ENCODE measurements at regions of chr17 and their contacts with region 1.

Region 1: DNA sequence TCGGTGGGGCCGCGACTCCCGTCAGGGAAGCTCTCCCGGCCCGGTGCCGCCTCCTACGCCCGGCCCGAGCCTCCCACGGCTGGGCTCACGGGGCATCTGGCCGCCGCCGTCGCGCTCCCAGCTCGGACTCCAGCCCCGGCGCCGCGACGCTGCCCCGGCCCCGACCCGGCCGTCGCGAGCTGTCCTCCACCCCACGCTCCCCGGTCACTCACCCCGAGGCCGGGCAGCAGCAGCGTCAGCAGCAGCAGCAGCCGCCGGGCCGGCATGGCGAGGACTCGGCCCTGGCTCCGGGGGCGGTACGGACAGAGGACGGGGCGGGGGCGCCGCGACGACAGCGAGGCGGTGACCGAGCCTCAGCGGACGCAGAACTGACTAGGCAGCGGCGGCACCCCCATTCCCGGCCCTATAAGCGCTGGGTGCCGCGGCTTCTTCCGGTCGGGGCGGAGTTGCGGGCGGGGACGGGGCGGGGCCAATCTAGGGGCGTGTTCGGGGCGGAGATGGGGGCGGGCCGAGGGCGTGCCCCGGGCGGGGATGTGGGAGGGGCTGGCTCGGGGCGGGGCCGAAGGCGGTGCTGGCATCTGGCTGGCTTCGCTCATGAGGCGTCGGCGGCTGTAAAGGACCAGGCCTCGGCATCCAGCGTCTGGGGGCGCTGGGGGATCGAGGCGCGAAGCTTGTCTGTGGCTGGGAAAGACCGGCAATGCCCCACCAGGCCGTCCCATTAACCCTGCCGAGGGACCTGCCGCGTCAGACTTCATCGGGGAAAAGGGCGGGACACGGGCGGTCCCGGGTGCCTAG is at the start of gene ERN1:
- DNase-seq: peak; percentile 88
- H3K4me3 Mint-ChIP-seq: peak within 1 kb of the TSS; percentile 98
- H3K27ac Mint-ChIP-seq: peak within 1 kb of the TSS; percentile 93
- H3K4me1 Mint-ChIP-seq: peaks cover 68% of the 10 kb centered on the region
- H3K27me3 Mint-ChIP-seq: no peaks in the 10 kb centered on the region
- total RNA-seq, gene ERN1: 90.0 and 91.6 TPM in 2 replicates

Region 2: GRCh38 chr17:63611354-63611753 is 518.6 kb before region 1 on chr17:
- intact Hi-C with region 1: no loop called
- DNase-seq: peak; percentile 11
- H3K4me3 Mint-ChIP-seq: peak overlapping the region; percentile 77
- H3K27ac Mint-ChIP-seq: peak overlapping the region; percentile 98
- H3K4me1 Mint-ChIP-seq: peaks cover 30% of the 10 kb centered on the region
- H3K27me3 Mint-ChIP-seq: no peaks in the 10 kb centered on the region

Region 3: GRCh38 chr17:63773381-63774140 is 356.4 kb before region 1 on chr17 and contains the start of gene CCDC47:
- intact Hi-C with region 1: loop called (anchors 1 kb)
- DNase-seq: peak; percentile 99
- H3K4me3 Mint-ChIP-seq: peak within 1 kb of the TSS; percentile 96
- H3K27ac Mint-ChIP-seq: peak within 1 kb of the TSS; percentile 100
- H3K4me1 Mint-ChIP-seq: peaks cover 63% of the 10 kb centered on the region
- H3K27me3 Mint-ChIP-seq: no peaks in the 10 kb centered on the region
- total RNA-seq, gene CCDC47: 74.8 and 79.2 TPM in 2 replicates

Region 4: GRCh38 chr17:63946440-63947367 is 183.3 kb before region 1 on chr17:
- intact Hi-C with region 1: loop called (anchors 1 kb)
- DNase-seq: peak; percentile 44
- H3K4me3 Mint-ChIP-seq: peak overlapping the region; percentile 73
- H3K27ac Mint-ChIP-seq: peak overlapping the region; percentile 84
- H3K4me1 Mint-ChIP-seq: peaks cover 12% of the 10 kb centered on the region
- H3K27me3 Mint-ChIP-seq: peaks cover 6% of the 10 kb centered on the region

Region 5: GRCh38 chr17:64063766-64064224 is 66.2 kb before region 1 on chr17:
- intact Hi-C with region 1: loop called (anchors 1 kb)
- DNase-seq: peak; percentile 23
- H3K4me3 Mint-ChIP-seq: no peak overlapping the region
- H3K27ac Mint-ChIP-seq: peak overlapping the region; percentile 63
- H3K4me1 Mint-ChIP-seq: peaks cover 91% of the 10 kb centered on the region
- H3K27me3 Mint-ChIP-seq: no peaks in the 10 kb centered on the region

Region 6: GRCh38 chr17:64115871-64116534 is 14.0 kb before region 1 on chr17:
- intact Hi-C with region 1: loop called (anchors 1 kb)
- DNase-seq: no peak
- H3K4me3 Mint-ChIP-seq: peak overlapping the region; percentile 70
- H3K27ac Mint-ChIP-seq: peak overlapping the region; percentile 83
- H3K4me1 Mint-ChIP-seq: peaks cover 68% of the 10 kb centered on the region
- H3K27me3 Mint-ChIP-seq: no peaks in the 10 kb centered on the region

Region 7: DNA sequence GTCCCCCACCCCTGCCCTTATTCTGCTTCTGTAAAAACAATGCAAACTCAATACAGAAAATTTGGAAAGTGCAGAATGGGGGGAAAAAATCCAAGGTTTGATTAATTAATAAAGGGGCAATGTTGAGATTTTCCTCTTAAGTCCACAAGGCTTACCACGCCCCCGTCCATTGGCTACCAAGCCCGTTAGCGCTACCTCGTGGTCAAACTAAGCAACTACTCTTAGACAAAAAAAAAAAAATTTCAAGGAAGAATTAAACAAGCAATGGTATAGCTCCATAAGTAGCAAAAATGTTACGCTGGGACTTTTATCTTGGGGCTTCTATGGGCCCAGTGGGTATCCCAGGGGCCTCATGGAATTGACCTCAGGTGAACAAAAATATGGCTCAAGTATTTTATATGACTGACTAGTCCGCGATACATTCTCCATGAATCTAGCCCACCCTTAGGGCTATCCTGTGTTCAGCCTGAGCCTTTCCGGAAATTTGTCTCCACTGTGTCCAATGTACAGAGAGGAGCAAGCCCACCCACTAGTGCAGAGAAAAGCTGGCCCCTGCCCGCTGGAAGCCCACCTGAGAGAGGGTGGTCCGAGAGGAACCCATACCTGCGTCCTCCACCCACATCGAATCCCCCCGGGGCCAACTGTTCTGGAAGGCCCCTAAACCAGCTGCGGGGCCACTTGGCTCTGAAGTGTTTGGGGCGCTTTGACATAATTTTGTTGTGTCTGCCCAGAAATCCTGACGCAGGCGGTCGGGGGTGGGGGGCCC is 152.2 kb after region 1 on chr17:
- intact Hi-C with region 1: loop called (anchors 5 kb)
- DNase-seq: peak; percentile 28
- H3K4me3 Mint-ChIP-seq: no peak overlapping the region
- H3K27ac Mint-ChIP-seq: no peak overlapping the region
- H3K4me1 Mint-ChIP-seq: peaks cover 7% of the 10 kb centered on the region
- H3K27me3 Mint-ChIP-seq: no peaks in the 10 kb centered on the region

Region 8: DNA sequence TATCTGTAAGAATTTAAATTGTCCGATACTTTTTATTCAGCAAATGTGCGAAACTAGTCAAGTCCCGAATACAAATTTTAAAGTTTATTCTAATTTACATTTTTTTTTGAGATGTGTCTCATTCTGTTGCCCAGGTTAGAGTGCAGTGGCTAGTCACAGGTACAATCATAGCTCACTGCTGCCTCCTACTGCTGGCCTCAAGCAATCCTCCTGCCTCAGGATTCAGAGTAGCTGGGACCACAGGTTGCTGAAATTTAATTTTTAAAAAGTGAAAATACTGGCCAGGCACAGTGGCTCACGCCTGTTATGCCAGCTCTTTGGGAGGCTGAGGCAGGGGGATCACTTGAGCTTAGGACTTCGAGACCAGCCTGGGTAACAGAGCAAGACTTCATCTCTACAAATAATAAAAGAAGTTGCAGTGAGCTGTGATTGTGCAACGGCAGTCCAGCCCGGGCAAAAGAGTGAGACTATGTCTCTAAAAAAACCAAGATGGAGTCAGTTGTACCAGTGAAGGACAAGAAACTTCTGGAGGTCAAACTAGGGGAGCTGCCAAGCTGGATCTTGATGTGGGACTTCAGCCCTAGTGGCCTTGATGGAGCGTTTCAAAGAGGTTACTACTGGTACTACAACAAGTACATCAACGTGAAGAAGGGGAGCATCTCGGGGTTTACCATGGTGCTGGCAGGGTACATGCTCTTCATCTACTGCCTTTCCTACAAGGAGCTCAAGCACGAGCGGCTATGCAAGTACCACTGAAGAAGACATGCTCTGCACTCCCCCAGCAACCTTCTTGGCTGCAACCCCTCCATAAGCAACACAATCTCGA is 361.3 kb after region 1 on chr17:
- intact Hi-C with region 1: no loop called
- DNase-seq: peak; percentile 53
- H3K4me3 Mint-ChIP-seq: no peak overlapping the region
- H3K27ac Mint-ChIP-seq: no peak overlapping the region
- H3K4me1 Mint-ChIP-seq: peaks cover 30% of the 10 kb centered on the region
- H3K27me3 Mint-ChIP-seq: no peaks in the 10 kb centered on the region